CD8-positive, alpha-beta T cell (primary cell): ENCODE measurements at regions of chr2 and their contacts with region 1.

Region 1: GRCh38 chr2:171703574-171704347 is 16.5 kb downstream of the DYNC1I2 start:
- DNase-seq: peak in 2 of 9 experiments; percentile 47 to 59
- ATAC-seq: no peak
- H3K4me3 ChIP-seq: no peak overlapping the region
- H3K4me3 Mint-ChIP-seq: no peak overlapping the region
- H3K27ac ChIP-seq: no peak overlapping the region
- H3K27ac Mint-ChIP-seq: peak overlapping the region; percentile 15
- H3K4me1 ChIP-seq: no peaks in the 10 kb centered on the region
- H3K4me1 Mint-ChIP-seq: peaks cover 7% of the 10 kb centered on the region
- H3K27me3 ChIP-seq: no peaks in the 10 kb centered on the region
- H3K27me3 Mint-ChIP-seq: no peaks in the 10 kb centered on the region
- CTCF ChIP-seq: peak; percentile 54

Region 2: DNA sequence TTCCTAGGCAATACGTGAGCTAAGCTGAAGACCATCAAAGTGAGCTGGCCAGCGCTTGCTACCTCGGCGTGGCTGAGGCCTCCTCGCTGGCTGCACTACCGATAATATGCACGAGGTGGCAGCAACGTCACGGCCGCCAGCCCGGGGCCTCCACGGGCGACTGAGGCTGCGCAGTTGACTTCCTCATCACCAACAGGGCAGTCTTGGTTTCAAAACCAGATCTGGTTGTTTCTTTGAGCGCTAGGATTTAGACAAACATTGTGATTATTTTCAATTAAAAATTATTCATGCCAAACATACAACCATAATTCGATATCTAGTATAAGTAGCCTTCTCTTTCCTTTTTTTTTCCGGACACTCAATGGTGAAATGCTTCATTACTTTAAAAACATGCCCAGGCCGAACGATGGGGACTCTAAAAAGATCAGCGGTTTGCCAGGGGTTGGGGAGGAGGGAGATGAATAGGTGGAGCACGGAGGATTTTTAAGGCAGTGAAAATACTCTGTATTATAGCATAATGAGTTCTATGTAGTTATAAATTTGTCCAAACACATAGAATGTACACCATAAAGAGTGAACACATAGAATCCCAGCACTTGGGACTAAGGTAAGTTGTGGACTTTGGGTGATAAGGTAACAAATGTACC is 129.5 kb before region 1 on chr2:
- CTCF ChIA-PET with region 1: no interaction called
- POLR2A ChIA-PET with region 1: no interaction called
- intact Hi-C with region 1: loop called (anchors 5 to 10 kb)
- DNase-seq: peak; percentile 62 to 87 (median 78)
- ATAC-seq: peak; percentile 100
- H3K4me3 ChIP-seq: no peak overlapping the region
- H3K4me3 Mint-ChIP-seq: peak overlapping the region; percentile 42
- H3K27ac ChIP-seq: no peak overlapping the region
- H3K27ac Mint-ChIP-seq: no peak overlapping the region
- H3K4me1 ChIP-seq: no peaks in the 10 kb centered on the region
- H3K4me1 Mint-ChIP-seq: peaks cover 6% of the 10 kb centered on the region
- H3K27me3 ChIP-seq: no peaks in the 10 kb centered on the region
- H3K27me3 Mint-ChIP-seq: peaks cover 2% of the 10 kb centered on the region
- CTCF ChIP-seq: peak; percentile 97

Region 3: DNA sequence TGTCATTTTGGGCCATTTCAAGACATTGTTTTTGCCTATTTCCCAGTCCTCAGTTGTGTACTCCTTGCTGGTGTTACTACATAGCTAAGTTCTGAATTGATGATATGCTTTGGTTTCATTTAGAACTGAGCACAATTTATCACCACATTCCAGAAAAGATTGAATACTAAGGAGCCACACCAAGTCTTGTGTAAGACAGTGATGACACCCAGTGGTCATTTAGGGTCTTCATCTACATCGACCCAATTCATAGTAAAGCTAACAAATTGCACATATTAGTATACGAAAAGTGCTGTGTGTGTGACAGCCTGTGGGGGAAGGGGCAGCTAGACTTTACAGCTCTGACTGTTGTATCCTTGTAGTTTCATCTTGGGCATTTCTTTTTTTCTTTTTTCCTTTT is 409.9 kb after region 1 on chr2:
- CTCF ChIA-PET with region 1: interaction called, 11 read pairs
- POLR2A ChIA-PET with region 1: no interaction called
- intact Hi-C with region 1: loop called in 1 of 2 experiments (anchors 2 kb)
- DNase-seq: peak in 1 of 9 experiments; percentile 46
- ATAC-seq: no peak
- H3K4me3 ChIP-seq: no peak overlapping the region
- H3K4me3 Mint-ChIP-seq: no peak overlapping the region
- H3K27ac ChIP-seq: no peak overlapping the region
- H3K27ac Mint-ChIP-seq: no peak overlapping the region
- H3K4me1 ChIP-seq: no peaks in the 10 kb centered on the region
- H3K4me1 Mint-ChIP-seq: no peaks in the 10 kb centered on the region
- H3K27me3 ChIP-seq: peaks cover 0 to 3% of the 10 kb centered on the region in 2 experiments
- H3K27me3 Mint-ChIP-seq: peaks cover 34% of the 10 kb centered on the region
- CTCF ChIP-seq: no peak

Region 4: GRCh38 chr2:172484253-172484652 is 780.5 kb after region 1 on chr2:
- CTCF ChIA-PET with region 1: interaction called, 3 read pairs
- POLR2A ChIA-PET with region 1: no interaction called
- intact Hi-C with region 1: loop called (anchors 1 to 5 kb)
- DNase-seq: peak in 2 of 9 experiments; percentile 41 to 62
- ATAC-seq: peak; percentile 63
- H3K4me3 ChIP-seq: no peak overlapping the region
- H3K4me3 Mint-ChIP-seq: peak overlapping the region; percentile 15
- H3K27ac ChIP-seq: no peak overlapping the region
- H3K27ac Mint-ChIP-seq: peak overlapping the region; percentile 75
- H3K4me1 ChIP-seq: peaks cover 55% of the 10 kb centered on the region
- H3K4me1 Mint-ChIP-seq: peaks cover 68% of the 10 kb centered on the region
- H3K27me3 ChIP-seq: no peaks in the 10 kb centered on the region
- H3K27me3 Mint-ChIP-seq: no peaks in the 10 kb centered on the region
- CTCF ChIP-seq: peak; percentile 44

Region 5: DNA sequence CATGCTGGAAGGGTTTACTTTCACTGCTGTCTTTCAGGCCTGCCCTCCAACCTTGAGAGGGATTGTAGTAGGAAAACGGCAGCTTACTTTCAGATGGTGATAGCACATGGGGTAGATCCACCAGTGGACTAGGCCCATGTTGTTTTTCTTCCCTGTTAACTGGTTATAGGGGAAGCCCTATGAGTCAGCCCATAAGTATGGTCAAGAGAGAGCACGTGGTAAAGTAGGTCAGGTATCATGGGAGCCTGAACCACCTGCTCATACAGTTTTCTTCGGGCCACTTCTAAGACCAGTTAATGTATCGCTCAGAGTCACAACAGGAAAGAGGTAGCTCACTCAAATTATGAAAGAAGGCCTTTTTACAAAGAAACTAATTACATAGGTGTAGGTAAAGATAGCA is 885.2 kb after region 1 on chr2:
- CTCF ChIA-PET with region 1: no interaction called
- POLR2A ChIA-PET with region 1: no interaction called
- intact Hi-C with region 1: loop called in 1 of 2 experiments (anchors 10 kb)
- DNase-seq: no peak
- ATAC-seq: no peak
- H3K4me3 ChIP-seq: no peak overlapping the region
- H3K4me3 Mint-ChIP-seq: no peak overlapping the region
- H3K27ac ChIP-seq: no peak overlapping the region
- H3K27ac Mint-ChIP-seq: no peak overlapping the region
- H3K4me1 ChIP-seq: peaks cover 16% of the 10 kb centered on the region
- H3K4me1 Mint-ChIP-seq: peaks cover 44% of the 10 kb centered on the region
- H3K27me3 ChIP-seq: no peaks in the 10 kb centered on the region
- H3K27me3 Mint-ChIP-seq: no peaks in the 10 kb centered on the region
- CTCF ChIP-seq: no peak